ENCODE measurements at regions of chr17 and their contacts with region 1.

Region 1: GRCh38 chr17:58317421-58318064 is 11.1 kb downstream of the TSPOAP1 start:
- DNase-seq: peak in 2 of 3 donors; percentile 66 to 67
- H3K4me3 ChIP-seq: no peak overlapping the region
- H3K4me3 Mint-ChIP-seq: no peak overlapping the region
- H3K27ac ChIP-seq: no peak overlapping the region
- H3K27ac Mint-ChIP-seq: no peak overlapping the region
- H3K4me1 ChIP-seq: no peaks in the 10 kb centered on the region
- H3K4me1 Mint-ChIP-seq: peaks cover 14% of the 10 kb centered on the region
- H3K27me3 ChIP-seq: no peaks in the 10 kb centered on the region
- H3K27me3 Mint-ChIP-seq: peaks cover 17 to 41% (median 30%) of the 10 kb centered on the region in 3 donors
- CTCF ChIP-seq: peak; percentile 88

Region 2: GRCh38 chr17:58364270-58364942 is 46.9 kb after region 1 on chr17:
- intact Hi-C with region 1: loop called in 1 of 2 experiments (anchors 10 kb)
- DNase-seq: no peak
- H3K4me3 ChIP-seq: no peak overlapping the region
- H3K4me3 Mint-ChIP-seq: no peak overlapping the region
- H3K27ac ChIP-seq: no peak overlapping the region
- H3K27ac Mint-ChIP-seq: no peak overlapping the region
- H3K4me1 ChIP-seq: no peaks in the 10 kb centered on the region
- H3K4me1 Mint-ChIP-seq: peaks cover 1% of the 10 kb centered on the region
- H3K27me3 ChIP-seq: no peaks in the 10 kb centered on the region
- H3K27me3 Mint-ChIP-seq: peaks cover 4 to 18% (median 14%) of the 10 kb centered on the region in 3 donors
- CTCF ChIP-seq: no peak

Region 3: DNA sequence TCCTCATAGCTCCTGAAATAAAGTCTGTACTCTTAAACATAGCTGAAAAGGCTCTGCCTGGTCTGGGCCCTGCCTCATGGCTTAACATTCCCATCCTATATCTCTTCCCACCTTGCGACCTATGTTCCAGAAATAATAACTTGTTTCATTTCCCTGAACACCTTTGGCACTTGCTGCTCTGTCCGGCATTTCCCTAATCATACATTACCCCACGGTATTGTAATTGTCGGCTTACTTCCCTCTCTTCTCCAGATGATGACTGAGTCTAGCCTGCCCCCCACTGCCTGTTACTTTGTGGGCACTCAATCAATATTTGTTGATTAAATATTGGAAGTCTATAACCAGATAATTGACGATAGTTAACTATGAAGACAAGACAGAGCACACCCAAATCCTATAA is 57.7 kb after region 1 on chr17:
- intact Hi-C with region 1: loop called in 1 of 2 experiments (anchors 2 kb)
- DNase-seq: peak; percentile 31 to 56 (median 55)
- H3K4me3 ChIP-seq: no peak overlapping the region
- H3K4me3 Mint-ChIP-seq: no peak overlapping the region
- H3K27ac ChIP-seq: no peak overlapping the region
- H3K27ac Mint-ChIP-seq: peak overlapping the region in 1 of 7 donors; percentile 43
- H3K4me1 ChIP-seq: peaks cover 26 to 27% of the 10 kb centered on the region in 2 donors
- H3K4me1 Mint-ChIP-seq: peaks cover 30% of the 10 kb centered on the region
- H3K27me3 ChIP-seq: no peaks in the 10 kb centered on the region
- H3K27me3 Mint-ChIP-seq: peaks cover 2 to 17% (median 16%) of the 10 kb centered on the region in 3 donors
- CTCF ChIP-seq: peak; percentile 39

Region 4: DNA sequence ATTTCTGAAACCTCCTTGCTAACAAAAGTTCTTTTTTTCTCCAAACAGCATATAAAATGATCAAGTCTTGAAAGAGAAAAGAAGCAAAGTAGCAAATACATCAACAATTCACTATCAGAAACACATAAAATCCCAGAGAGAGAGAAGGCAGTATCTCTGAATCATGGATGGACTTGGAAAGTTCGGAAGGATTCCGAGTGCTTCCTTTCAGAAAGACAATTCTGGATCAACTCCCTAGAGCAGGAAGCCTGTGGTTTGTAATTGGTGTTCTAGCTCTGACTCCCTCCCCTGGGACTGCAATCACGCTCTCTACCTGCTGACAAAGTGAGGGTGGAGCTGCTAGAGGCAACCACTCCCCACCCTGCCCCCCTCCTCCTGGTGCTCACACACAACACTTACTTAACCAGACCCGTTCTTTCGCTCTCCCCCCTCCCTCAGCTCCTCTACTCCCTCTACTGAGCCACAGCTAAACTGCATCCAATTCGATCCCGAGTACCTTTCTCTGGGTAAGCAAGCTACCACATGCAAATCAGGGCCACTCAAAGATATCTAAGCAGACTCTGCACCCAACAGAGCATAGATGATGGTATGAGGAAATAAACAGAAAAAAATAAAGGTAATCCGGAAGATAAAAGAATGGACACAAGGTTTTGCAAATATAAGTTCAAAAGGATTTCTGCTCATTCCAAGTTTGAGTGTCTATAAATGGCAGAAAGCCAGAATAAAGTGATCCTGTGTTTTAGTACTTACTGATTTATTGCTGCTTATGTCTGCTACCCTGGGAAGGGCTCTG is 100.0 kb after region 1 on chr17 and contains the start of gene RNF43:
- intact Hi-C with region 1: loop called (anchors 2 to 5 kb)
- DNase-seq: peak; percentile 67 to 78 (median 72)
- H3K4me3 ChIP-seq: no peak within 1 kb of the TSS
- H3K4me3 Mint-ChIP-seq: peak within 1 kb of the TSS in 1 of 2 donors; percentile 53
- H3K27ac ChIP-seq: no peak within 1 kb of the TSS
- H3K27ac Mint-ChIP-seq: peak within 1 kb of the TSS in 1 of 7 donors; percentile 27
- H3K4me1 ChIP-seq: peaks cover 4 to 6% of the 10 kb centered on the region in 2 donors
- H3K4me1 Mint-ChIP-seq: peaks cover 11% of the 10 kb centered on the region
- H3K27me3 ChIP-seq: no peaks in the 10 kb centered on the region
- H3K27me3 Mint-ChIP-seq: peaks cover 3 to 10% (median 7%) of the 10 kb centered on the region in 3 donors
- CTCF ChIP-seq: peak; percentile 80
- polyA plus RNA-seq, gene RNF43: 0.01 to 0.11 TPM in 2 of 3 donors, not detected in the other

Region 5: GRCh38 chr17:58447039-58447975 is 129.8 kb after region 1 on chr17:
- intact Hi-C with region 1: loop called (anchors 5 to 10 kb)
- DNase-seq: peak; percentile 61 to 75 (median 69)
- H3K4me3 ChIP-seq: no peak overlapping the region
- H3K4me3 Mint-ChIP-seq: no peak overlapping the region
- H3K27ac ChIP-seq: no peak overlapping the region
- H3K27ac Mint-ChIP-seq: no peak overlapping the region
- H3K4me1 ChIP-seq: no peaks in the 10 kb centered on the region
- H3K4me1 Mint-ChIP-seq: peaks cover 3% of the 10 kb centered on the region
- H3K27me3 ChIP-seq: no peaks in the 10 kb centered on the region
- H3K27me3 Mint-ChIP-seq: peaks cover 4 to 44% (median 6%) of the 10 kb centered on the region in 3 donors
- CTCF ChIP-seq: peak; percentile 75